GM12878 (cell line): ENCODE measurements at regions of chr11 and their contacts with region 1.

Region 1: GRCh38 chr11:60970369-60970774 is 1.1 kb upstream of the CD6 start:
- DNase-seq: no peak
- ATAC-seq: peak; percentile 96
- H3K4me3 ChIP-seq: no peak overlapping the region
- H3K27ac ChIP-seq: no peak overlapping the region
- H3K4me1 ChIP-seq: peaks cover 6% of the 10 kb centered on the region; the same call in 1 of the 2 replicates
- H3K27me3 ChIP-seq: no peaks in the 10 kb centered on the region
- CTCF ChIP-seq: peak; percentile 87 to 96 (median 94)
- EP300 ChIP-seq: no peak
- POLR2A ChIP-seq: no peak
- RAD21 ChIP-seq: peak; percentile 90

Region 2: DNA sequence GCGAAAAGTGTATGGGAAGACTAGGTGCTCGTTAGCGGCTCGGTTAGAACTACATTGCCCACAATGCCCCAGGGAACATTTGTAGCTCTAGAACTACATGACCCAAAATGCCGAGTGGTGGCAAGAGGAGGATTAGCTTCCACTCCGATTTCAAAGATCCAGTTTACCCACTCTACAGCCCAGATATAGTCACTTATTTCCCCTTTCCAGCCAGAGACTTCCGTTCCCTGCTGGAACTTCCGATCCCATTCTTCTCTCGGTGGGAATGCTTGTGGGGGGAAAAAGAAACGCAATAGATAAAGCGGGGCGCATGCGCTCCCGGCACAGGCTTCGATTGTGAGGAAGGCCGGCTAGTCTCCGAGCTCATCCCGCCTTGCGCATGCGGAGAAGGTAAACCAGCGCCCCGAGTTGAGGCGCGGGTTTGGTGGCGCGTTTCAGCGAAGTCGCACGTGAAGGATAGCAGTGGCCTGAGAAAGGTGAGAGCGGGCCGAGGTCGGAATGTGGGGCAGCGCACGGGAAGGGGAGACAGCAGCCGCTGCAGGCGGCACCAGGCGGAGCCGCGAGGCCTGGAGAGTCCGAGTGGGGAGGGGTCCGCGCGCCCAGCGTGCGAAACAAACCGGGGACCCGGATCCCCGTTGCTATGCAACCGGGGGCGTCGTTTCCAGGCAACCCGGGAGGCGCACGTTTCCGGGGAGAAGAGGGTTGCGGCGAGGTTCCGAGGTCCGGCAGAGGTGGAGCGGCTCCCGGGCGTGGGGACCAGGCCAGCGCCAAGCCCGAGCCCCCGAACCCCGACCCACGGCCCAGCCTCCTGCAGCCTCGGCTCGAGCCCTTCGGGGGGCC is 56.4 kb before region 1 on chr11 and contains the start of gene TMEM109:
- CTCF ChIA-PET with region 1: interaction called, 46 read pairs
- POLR2A ChIA-PET with region 1: no interaction called
- RAD21 ChIA-PET with region 1: interaction called, 3 read pairs
- SMC1A ChIA-PET with region 1: interaction called, 29 read pairs
- in situ Hi-C with region 1: no loop called
- intact Hi-C with region 1: no loop called
- DNase-seq: peak; percentile 86
- ATAC-seq: peak; percentile 67
- H3K4me3 ChIP-seq: peak within 1 kb of the TSS; percentile 82
- H3K27ac ChIP-seq: peak within 1 kb of the TSS; percentile 94
- H3K4me1 ChIP-seq: peaks cover 59% of the 10 kb centered on the region
- H3K27me3 ChIP-seq: no peaks in the 10 kb centered on the region
- CTCF ChIP-seq: no peak
- EP300 ChIP-seq: no peak
- POLR2A ChIP-seq: peak; percentile 70
- RAD21 ChIP-seq: no peak
- polyA plus RNA-seq, gene TMEM109: 21.9 to 52.9 TPM

Region 3: GRCh38 chr11:61021661-61022212 is 51.4 kb after region 1 on chr11:
- CTCF ChIA-PET with region 1: interaction called, 6 read pairs
- POLR2A ChIA-PET with region 1: no interaction called
- RAD21 ChIA-PET with region 1: no interaction called
- SMC1A ChIA-PET with region 1: interaction called, 13 read pairs
- in situ Hi-C with region 1: no loop called
- intact Hi-C with region 1: no loop called
- DNase-seq: no peak
- ATAC-seq: peak; percentile 70
- H3K4me3 ChIP-seq: no peak overlapping the region
- H3K27ac ChIP-seq: no peak overlapping the region
- H3K4me1 ChIP-seq: peaks cover 22% of the 10 kb centered on the region
- H3K27me3 ChIP-seq: no peaks in the 10 kb centered on the region
- CTCF ChIP-seq: no peak
- EP300 ChIP-seq: no peak
- POLR2A ChIP-seq: no peak
- RAD21 ChIP-seq: no peak

Region 4: DNA sequence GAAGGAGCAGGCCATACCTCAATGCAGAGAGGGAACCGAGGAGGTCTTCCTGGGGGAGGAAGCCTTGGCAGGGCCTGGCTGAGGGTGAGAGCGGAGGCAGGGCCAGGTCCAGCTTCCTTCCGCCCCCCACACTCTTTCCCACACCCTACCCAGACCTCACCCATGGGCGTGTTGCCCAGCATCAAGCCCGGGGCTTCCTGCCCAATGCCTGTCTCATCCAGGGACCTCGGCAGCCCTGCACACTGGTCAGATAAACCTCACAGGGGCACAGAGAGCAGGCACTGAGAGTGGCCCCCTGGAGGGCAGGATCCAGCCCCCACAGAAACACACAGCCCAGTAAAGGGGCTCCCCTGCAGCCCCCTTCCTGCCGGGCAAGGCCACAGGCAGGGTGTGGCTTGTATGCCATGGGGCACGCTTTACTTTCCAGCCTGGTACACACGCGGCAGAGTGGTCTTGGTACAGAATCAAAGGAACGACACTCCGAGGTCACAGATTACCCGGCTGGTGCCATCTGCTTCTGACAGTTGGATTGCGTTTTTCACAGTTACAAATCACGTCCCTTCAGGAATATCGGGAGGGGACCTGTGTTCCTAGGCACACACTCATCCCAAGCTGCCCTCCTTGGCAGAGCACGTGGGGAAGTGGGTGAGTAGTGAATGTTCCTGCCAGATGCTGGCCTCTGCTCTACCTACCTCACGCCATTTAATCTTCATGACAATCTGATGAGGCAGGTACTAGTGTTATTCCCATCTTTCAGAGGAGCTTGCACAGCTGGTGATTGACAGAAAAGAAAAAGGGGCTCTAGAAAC is 111.9 kb after region 1 on chr11:
- CTCF ChIA-PET with region 1: interaction called, 3 read pairs
- POLR2A ChIA-PET with region 1: no interaction called
- RAD21 ChIA-PET with region 1: interaction called, 13 read pairs
- SMC1A ChIA-PET with region 1: interaction called, 3 read pairs
- in situ Hi-C with region 1: no loop called
- intact Hi-C with region 1: no loop called
- DNase-seq: no peak
- ATAC-seq: no peak
- H3K4me3 ChIP-seq: no peak overlapping the region
- H3K27ac ChIP-seq: no peak overlapping the region
- H3K4me1 ChIP-seq: no peaks in the 10 kb centered on the region
- H3K27me3 ChIP-seq: no peaks in the 10 kb centered on the region
- CTCF ChIP-seq: no peak
- EP300 ChIP-seq: no peak
- POLR2A ChIP-seq: no peak
- RAD21 ChIP-seq: no peak

Region 5: GRCh38 chr11:61129639-61130523 is 159.5 kb after region 1 on chr11:
- CTCF ChIA-PET with region 1: interaction called, 7 read pairs
- POLR2A ChIA-PET with region 1: no interaction called
- RAD21 ChIA-PET with region 1: no interaction called
- SMC1A ChIA-PET with region 1: interaction called, 4 read pairs
- in situ Hi-C with region 1: no loop called
- intact Hi-C with region 1: loop called (anchors 1 kb)
- DNase-seq: peak; percentile 44
- ATAC-seq: peak; percentile 97
- H3K4me3 ChIP-seq: no peak overlapping the region
- H3K27ac ChIP-seq: peak overlapping the region; percentile 52; the same call in 1 of the 2 replicates
- H3K4me1 ChIP-seq: peaks cover 7% of the 10 kb centered on the region
- H3K27me3 ChIP-seq: no peaks in the 10 kb centered on the region
- CTCF ChIP-seq: peak; percentile 100
- EP300 ChIP-seq: no peak
- POLR2A ChIP-seq: no peak; the same call in 1 of the 2 replicates
- RAD21 ChIP-seq: peak; percentile 100